OCI-LY7 (cell line): ENCODE measurements at regions of chrX and their contacts with region 1.

Region 1: GRCh38 chrX:148380650-148381561 is 119.5 kb upstream of the AFF2 start:
- DNase-seq: peak; percentile 65
- H3K4me3 ChIP-seq: peak overlapping the region; percentile 60
- H3K27ac ChIP-seq: peak overlapping the region; percentile 87
- H3K4me1 ChIP-seq: peaks cover 36% of the 10 kb centered on the region
- CTCF ChIP-seq: no peak

Region 2: DNA sequence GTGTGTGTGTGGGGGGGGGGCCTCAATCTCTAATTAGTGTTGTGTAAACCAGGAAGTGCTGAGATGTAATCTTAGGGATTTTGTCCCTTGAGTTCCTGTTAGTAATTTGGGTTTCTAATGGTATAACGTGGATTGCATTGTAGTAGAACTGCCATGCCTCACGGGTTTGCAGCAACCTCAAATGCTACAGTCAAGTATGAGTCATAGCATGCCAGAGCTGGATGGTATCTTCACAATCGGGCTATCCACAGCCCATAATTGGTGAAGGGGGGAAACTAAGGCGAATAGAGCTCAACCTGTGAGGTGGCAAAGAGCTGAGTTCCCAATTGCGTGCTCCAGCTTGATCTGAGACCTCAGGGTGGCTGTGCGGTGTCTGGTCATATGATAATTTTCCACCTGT is 402.0 kb before region 1 on chrX:
- CTCF ChIA-PET with region 1: no interaction called
- POLR2A ChIA-PET with region 1: no interaction called
- intact Hi-C with region 1: no loop called
- DNase-seq: no peak
- H3K4me3 ChIP-seq: no peak overlapping the region
- H3K27ac ChIP-seq: no peak overlapping the region
- H3K4me1 ChIP-seq: no peaks in the 10 kb centered on the region
- CTCF ChIP-seq: no peak

Region 3: GRCh38 chrX:148133105-148133725 is 247.7 kb before region 1 on chrX:
- CTCF ChIA-PET with region 1: no interaction called
- POLR2A ChIA-PET with region 1: no interaction called
- intact Hi-C with region 1: loop called (anchors 5 kb)
- DNase-seq: peak; percentile 64
- H3K4me3 ChIP-seq: no peak overlapping the region
- H3K27ac ChIP-seq: no peak overlapping the region
- H3K4me1 ChIP-seq: peaks cover 14% of the 10 kb centered on the region
- CTCF ChIP-seq: peak; percentile 72

Region 4: GRCh38 chrX:148310426-148311165 is 70.3 kb before region 1 on chrX:
- CTCF ChIA-PET with region 1: no interaction called
- POLR2A ChIA-PET with region 1: no interaction called
- intact Hi-C with region 1: loop called (anchors 5 kb)
- DNase-seq: peak; percentile 85
- H3K4me3 ChIP-seq: peak overlapping the region; percentile 24
- H3K27ac ChIP-seq: peak overlapping the region; percentile 86
- H3K4me1 ChIP-seq: peaks cover 39% of the 10 kb centered on the region
- CTCF ChIP-seq: no peak

Region 5: GRCh38 chrX:148459343-148459742 is 78.4 kb after region 1 on chrX:
- CTCF ChIA-PET with region 1: no interaction called
- POLR2A ChIA-PET with region 1: interaction called, 3 read pairs
- intact Hi-C with region 1: loop called (anchors 1 kb)
- DNase-seq: peak; percentile 90
- H3K4me3 ChIP-seq: peak overlapping the region; percentile 50
- H3K27ac ChIP-seq: peak overlapping the region; percentile 100
- H3K4me1 ChIP-seq: peaks cover 78% of the 10 kb centered on the region
- CTCF ChIP-seq: no peak

Region 6: GRCh38 chrX:148804579-148805355 is 423.9 kb after region 1 on chrX:
- CTCF ChIA-PET with region 1: no interaction called
- POLR2A ChIA-PET with region 1: no interaction called
- intact Hi-C with region 1: no loop called
- DNase-seq: no peak
- H3K4me3 ChIP-seq: no peak overlapping the region
- H3K27ac ChIP-seq: no peak overlapping the region
- H3K4me1 ChIP-seq: no peaks in the 10 kb centered on the region
- CTCF ChIP-seq: no peak